Cardiac septum (tissue), 1 donor: ENCODE measurements at regions of chr17 and their contacts with region 1.

Region 1: DNA sequence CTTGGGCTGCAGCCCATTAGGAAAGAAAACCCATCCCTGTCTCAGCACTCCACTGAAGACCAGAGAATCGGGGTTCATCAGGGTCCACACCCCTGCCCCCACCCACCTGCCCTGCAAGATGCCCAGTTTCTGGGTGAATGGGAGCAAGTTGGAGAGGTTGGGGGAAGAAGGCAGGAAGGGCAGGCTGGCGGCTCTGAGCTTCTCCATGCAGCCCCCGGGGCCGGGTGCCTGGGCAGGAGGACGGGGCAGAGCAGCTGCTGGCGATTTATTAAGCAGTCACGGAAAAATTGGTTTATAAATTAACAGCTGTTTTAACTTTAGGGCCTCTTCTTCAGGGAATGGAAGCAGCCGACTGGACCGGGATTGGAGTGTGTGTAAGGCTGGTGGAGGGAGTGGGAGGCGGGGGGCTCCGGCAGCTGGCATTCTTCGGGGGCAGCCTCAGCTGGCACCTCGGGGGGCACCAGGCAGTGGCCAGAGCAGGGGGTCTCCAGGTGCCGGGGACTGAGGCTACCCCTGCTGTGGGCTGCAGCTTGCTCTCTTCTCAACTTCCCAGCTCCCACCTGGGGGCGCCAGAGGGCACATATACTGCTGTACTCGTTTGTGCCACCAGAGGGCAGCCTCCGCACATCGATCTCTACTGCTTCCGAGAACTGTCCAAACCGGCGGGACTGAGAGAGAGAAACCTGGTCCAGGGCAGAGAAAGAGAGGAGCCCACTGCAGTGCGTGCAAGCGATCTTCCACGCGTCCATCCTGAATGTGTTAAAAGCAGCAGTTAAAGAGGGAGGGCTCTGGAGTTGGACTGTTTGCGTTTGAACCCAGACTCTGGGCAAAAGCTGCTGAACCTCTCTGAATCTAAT is 5.0 kb upstream of the PPP1R1B start:
- DNase-seq: peak; percentile 96

Region 2: DNA sequence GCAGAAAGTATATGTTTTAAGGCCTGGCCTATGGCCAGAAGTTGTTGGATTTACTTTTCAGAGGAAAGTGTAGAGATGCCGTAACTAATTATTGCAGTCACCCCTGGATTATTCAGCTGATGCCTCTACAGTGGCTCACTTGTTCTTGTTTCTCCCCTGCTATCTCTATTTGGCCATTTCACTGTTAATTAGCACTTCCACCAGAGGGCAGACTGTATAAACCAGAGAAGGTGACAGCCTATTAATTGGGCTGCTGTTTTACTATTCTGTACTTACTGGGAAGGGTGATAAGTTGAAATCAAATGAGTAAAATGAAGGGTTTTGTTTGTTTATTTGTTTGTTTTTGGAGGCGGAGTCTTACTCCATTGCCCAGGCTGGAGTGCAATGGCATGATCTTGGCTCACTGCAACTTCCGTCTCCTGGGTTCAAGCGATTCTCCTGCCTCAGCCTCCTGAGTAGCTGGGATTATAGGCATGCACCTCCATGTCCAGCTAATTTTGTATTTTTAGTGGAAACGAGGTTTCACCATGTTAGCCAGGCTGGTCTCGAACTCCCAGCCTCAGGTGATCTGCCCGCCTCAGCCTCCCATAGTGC is 94.4 kb before region 1 on chr17:
- intact Hi-C with region 1: loop called (anchors 5 kb)
- DNase-seq: no peak

Region 3: DNA sequence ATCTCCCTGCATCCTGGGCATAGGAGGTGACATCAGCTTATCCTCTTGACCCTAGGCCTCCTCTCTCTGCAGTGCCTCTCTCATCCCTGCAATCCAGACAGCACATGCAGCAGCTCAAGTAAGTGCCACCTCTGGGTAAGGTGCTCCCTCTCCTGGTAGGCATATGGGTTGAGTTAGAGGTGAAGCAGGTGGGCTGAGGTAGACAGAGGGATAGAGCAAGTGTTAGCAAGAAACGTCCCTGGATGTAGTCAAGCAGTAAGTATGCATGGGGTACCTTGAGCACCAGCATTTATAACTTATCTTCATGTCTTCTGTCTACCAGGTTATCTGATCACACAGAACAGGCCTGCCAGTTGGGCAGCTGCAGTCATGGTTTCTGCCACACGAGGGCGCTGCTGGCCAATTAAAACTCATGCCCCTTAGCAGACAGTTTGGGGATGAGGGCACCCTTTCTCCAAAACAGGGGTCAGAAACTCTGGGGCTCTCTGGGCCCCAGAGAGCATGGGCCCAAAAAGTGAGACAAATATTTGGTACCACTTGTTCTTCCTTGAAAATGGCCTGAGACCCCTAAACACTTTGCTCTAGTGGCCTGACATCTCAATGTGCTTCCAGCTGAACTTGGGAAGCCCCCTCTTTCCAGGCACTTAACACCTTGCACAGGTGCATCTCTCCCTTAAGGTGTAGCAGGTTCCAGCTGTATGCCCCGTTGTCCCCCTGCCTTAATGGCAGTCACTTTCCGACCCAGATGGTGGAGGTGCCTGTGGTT is 73.9 kb before region 1 on chr17:
- intact Hi-C with region 1: loop called (anchors 1 kb)
- DNase-seq: peak; percentile 83

Region 4: GRCh38 chr17:39573447-39574298 is 48.1 kb before region 1 on chr17:
- intact Hi-C with region 1: loop called (anchors 5 kb)
- DNase-seq: peak; percentile 80

Region 5: DNA sequence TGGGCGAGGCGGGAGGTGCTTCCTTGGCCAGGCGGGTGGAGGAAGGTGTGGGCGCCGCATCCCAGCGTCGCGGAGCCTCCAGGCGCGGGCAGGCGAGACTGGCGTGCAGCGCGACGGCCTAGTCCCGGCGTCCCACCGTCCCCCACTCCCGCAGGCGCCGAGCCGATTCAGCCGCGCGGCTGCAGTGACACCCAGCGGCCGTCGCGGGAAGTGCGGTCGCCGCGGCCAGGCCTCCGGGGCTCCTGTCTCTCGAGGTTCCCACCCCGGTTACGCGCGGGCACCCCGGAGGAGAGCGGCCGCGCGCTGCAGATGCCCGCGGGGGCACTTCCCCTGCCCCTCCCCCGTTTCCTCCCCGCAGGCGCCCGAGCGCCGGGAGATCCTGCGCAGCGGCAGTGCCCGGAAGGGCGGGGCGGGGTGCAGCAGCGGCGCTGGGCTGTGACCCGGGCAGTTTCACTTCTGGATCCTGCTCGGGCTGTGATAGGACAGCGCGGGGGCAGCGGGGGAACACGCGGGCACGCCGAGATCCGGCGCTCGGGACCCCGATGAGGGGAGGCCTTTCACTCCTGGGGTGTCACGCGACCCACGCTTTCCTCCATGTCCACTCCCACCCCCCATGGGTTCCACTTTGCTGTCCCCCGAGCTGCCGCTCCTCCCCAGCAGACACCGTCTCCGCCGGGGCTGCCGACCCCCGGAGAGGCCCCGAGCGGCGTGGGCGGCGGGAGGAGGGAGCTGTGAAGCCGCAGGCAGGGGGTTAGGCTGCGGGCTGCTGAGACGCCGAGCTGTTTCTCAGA is 132.6 kb after region 1 on chr17:
- intact Hi-C with region 1: loop called (anchors 5 kb)
- DNase-seq: peak; percentile 97